B cell (primary cell): ENCODE measurements at regions of chr4 and their contacts with region 1.

Region 1: DNA sequence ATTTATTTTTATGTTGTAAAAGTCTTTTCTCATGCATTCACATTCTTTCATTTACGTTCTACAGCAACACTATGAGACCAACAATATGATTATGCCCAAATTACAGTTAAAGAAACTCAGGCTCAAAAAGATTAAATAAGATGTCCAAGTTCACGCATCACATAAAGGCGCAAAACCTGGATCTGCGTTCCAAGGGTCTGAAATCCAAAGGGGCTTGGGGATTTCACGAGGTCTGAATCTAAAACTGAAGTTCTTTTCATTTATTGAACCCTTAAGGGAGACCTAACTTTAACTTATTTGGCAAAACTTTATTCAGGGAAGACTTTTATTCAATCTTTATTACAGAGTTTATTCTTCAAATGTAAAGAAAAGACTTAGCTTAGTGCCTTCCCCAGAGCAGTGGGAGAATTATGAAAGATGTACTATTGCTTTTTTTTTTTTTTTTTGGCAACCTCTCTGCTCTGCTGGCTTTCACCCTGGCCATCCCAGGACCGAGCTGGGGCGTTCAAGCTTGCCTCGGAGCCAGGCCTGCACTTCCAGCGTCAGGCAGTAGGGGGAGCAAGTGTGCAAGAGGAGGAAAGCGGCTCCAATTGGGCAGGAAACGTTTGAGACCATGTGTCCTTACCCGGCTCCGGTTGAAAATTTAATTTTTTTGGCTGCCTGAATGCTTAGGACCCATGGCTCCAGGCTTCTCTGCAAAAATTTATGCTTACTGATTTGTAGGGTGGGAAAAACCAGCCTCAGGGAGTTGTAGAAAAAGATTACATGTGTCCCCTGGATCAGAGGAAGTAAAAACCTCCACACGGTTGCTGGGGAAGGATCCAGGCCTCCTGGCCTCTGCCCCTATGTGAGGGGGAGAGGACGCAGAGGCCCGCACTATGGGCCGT is 344.3 kb upstream of the KLF3 start:
- DNase-seq: peak; percentile 85
- ATAC-seq: peak; percentile 81
- H3K4me3 ChIP-seq: peak overlapping the region; percentile 43 to 74 (median 54)
- H3K4me3 Mint-ChIP-seq: peak overlapping the region; percentile 83
- H3K27ac ChIP-seq: peak overlapping the region; percentile 82 to 87
- H3K27ac Mint-ChIP-seq: peak overlapping the region; percentile 86
- H3K4me1 ChIP-seq: peaks cover 16 to 21% of the 10 kb centered on the region in 2 donors
- H3K4me1 Mint-ChIP-seq: peaks cover 29% of the 10 kb centered on the region
- H3K27me3 ChIP-seq: no peaks in the 10 kb centered on the region
- H3K27me3 Mint-ChIP-seq: no peaks in the 10 kb centered on the region
- CTCF ChIP-seq: peak; percentile 93

Region 2: GRCh38 chr4:37686373-37687193 is 633.1 kb before region 1 on chr4 and contains the start of gene RELL1:
- CTCF ChIA-PET with region 1: no interaction called
- POLR2A ChIA-PET with region 1: no interaction called
- intact Hi-C with region 1: loop called (anchors 10 kb)
- DNase-seq: peak; percentile 96
- ATAC-seq: peak; percentile 85
- H3K4me3 ChIP-seq: peak within 1 kb of the TSS; percentile 66 to 86 (median 81)
- H3K4me3 Mint-ChIP-seq: peak within 1 kb of the TSS; percentile 92
- H3K27ac ChIP-seq: peak within 1 kb of the TSS; percentile 45 to 70
- H3K27ac Mint-ChIP-seq: peak within 1 kb of the TSS; percentile 89
- H3K4me1 ChIP-seq: peaks cover 31% of the 10 kb centered on the region in 2 donors
- H3K4me1 Mint-ChIP-seq: peaks cover 31% of the 10 kb centered on the region
- H3K27me3 ChIP-seq: peaks cover 0 to 12% (median 4%) of the 10 kb centered on the region in 4 experiments
- H3K27me3 Mint-ChIP-seq: peaks cover 12% of the 10 kb centered on the region
- CTCF ChIP-seq: no peak
- total RNA-seq, gene RELL1: 2.7 and 3.2 TPM in 2 replicates

Region 3: DNA sequence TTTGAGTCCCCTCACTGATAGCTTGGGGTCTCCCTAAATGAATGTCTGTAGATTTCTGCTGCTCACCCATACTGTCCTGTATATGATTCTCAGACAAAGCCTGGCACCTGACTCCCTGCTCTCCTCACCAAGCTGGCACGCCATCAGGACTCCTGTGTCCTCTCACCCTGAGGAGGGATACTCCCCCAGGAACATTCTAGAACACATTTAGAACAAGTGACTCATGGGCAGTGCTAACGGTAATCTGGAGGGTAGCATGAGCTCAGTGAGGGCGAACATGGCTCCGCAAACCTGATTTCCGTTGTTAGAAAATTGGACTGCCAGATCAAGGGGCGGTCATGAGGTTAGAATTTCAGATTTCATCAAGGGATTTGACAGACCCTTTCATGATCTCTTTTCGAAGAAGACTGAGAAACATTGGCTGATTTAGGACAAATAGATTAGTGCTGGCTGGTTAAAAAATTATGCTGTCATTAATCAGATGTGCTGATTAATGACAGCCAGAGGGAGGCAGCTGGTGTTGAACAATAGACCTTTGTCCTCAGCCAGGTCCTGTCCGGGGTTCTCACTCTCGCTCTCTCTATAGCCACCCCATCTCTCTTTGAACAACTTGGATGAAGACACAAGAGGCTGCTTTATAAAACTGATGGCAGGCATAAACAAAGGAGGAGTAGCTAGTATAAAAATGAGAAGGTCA is 115.2 kb before region 1 on chr4:
- CTCF ChIA-PET with region 1: no interaction called
- POLR2A ChIA-PET with region 1: no interaction called
- intact Hi-C with region 1: no loop called
- DNase-seq: no peak
- ATAC-seq: no peak
- H3K4me3 ChIP-seq: no peak overlapping the region
- H3K4me3 Mint-ChIP-seq: no peak overlapping the region
- H3K27ac ChIP-seq: no peak overlapping the region
- H3K27ac Mint-ChIP-seq: no peak overlapping the region
- H3K4me1 ChIP-seq: no peaks in the 10 kb centered on the region
- H3K4me1 Mint-ChIP-seq: no peaks in the 10 kb centered on the region
- H3K27me3 ChIP-seq: no peaks in the 10 kb centered on the region
- H3K27me3 Mint-ChIP-seq: no peaks in the 10 kb centered on the region
- CTCF ChIP-seq: no peak

Region 4: GRCh38 chr4:38683276-38683675 is 363.6 kb after region 1 on chr4:
- CTCF ChIA-PET with region 1: interaction called, 109 read pairs
- POLR2A ChIA-PET with region 1: interaction called, 12 read pairs
- intact Hi-C with region 1: no loop called
- DNase-seq: no peak
- ATAC-seq: no peak
- H3K4me3 ChIP-seq: no peak overlapping the region
- H3K4me3 Mint-ChIP-seq: no peak overlapping the region
- H3K27ac ChIP-seq: no peak overlapping the region
- H3K27ac Mint-ChIP-seq: no peak overlapping the region
- H3K4me1 ChIP-seq: peaks cover 3 to 12% of the 10 kb centered on the region in 2 donors
- H3K4me1 Mint-ChIP-seq: peaks cover 30% of the 10 kb centered on the region
- H3K27me3 ChIP-seq: no peaks in the 10 kb centered on the region
- H3K27me3 Mint-ChIP-seq: no peaks in the 10 kb centered on the region
- CTCF ChIP-seq: no peak

Region 5: DNA sequence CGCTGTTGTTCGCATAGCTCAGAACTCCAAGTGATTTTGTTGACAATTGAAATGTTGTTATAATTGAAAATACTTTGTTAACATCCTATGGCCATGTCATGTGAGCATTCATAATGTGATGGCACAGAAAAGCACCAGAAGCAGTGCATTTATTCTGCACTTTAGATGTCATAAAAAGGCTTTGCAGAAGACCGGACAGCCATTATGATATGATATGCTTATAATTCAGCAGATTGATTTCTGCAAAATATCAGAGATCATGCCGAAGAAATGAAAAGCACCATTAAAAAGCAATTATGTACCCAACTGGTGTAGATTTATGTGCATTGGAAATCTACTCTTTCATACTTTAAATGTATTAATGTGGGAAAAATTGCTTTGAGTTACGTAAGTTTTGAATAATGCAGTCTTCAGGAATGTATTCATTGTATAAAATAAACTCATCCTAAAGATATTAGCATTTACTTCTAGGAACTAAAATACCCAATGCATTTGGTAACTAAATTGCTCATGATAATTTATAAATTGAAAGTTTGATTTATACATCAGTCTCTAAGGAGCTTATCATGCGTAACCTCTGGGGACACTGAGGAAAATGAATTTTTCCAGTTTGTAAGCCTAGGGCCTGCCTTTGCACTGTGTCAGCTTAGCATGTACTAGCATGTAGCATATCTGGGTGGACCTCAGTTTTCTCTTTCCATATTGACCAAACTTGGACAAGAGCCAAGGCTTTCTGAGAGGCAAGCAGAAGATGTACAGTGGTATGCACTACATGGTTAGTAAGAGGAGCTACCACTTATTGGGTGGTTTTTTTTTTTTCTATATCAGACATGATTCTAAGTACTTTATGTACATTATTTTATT is 419.5 kb after region 1 on chr4:
- CTCF ChIA-PET with region 1: no interaction called
- POLR2A ChIA-PET with region 1: interaction called, 11 read pairs
- intact Hi-C with region 1: no loop called
- DNase-seq: no peak
- ATAC-seq: no peak
- H3K4me3 ChIP-seq: no peak overlapping the region
- H3K4me3 Mint-ChIP-seq: no peak overlapping the region
- H3K27ac ChIP-seq: no peak overlapping the region
- H3K27ac Mint-ChIP-seq: no peak overlapping the region
- H3K4me1 ChIP-seq: peaks cover 10 to 13% of the 10 kb centered on the region in 2 donors
- H3K4me1 Mint-ChIP-seq: peaks cover 13% of the 10 kb centered on the region
- H3K27me3 ChIP-seq: no peaks in the 10 kb centered on the region
- H3K27me3 Mint-ChIP-seq: no peaks in the 10 kb centered on the region
- CTCF ChIP-seq: no peak

Region 6: DNA sequence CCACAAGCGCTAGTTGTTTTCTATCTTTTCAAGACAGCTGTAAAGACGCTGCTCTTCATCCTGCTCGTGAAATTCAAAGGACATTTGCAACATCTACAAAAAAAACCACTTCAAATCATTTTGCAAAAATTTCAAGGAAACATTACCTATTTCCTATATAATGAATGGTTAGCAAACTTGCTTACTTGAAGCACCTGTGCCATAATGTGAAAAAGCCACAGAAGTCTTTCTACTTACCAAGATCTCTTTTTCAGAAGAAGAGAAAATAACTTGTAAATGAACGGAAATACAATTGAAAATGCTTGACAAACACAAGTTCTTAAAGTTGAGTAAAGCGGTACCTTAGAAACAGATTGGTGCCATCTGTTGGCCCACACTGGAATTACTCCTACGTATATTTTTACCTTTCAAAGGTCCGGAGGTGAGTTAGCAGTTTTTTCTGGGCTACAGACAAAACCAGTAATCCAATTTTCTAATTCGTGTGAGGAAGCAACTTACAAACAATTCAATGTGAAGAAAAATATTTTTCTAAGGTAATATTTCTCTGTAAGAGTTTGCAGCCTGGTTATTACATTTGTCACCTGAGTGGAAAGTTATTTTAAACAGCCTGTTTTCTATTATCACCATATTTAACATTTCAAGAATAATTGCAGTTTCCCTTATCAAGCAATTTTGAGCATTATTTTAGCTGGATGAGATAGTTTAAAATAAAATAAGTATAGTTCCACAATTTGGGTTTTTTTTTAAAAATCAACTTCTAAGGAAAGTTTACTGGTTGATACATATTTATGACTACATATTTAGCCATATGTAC is 537.0 kb after region 1 on chr4 and contains the start of gene TLR6:
- CTCF ChIA-PET with region 1: no interaction called
- POLR2A ChIA-PET with region 1: no interaction called
- intact Hi-C with region 1: loop called (anchors 5 kb)
- DNase-seq: peak; percentile 87
- ATAC-seq: peak; percentile 56
- H3K4me3 ChIP-seq: peak within 1 kb of the TSS; percentile 51 to 78 (median 70)
- H3K4me3 Mint-ChIP-seq: peak within 1 kb of the TSS; percentile 93
- H3K27ac ChIP-seq: peak within 1 kb of the TSS; percentile 73 to 77
- H3K27ac Mint-ChIP-seq: peak within 1 kb of the TSS; percentile 94
- H3K4me1 ChIP-seq: peaks cover 39 to 43% of the 10 kb centered on the region in 2 donors
- H3K4me1 Mint-ChIP-seq: peaks cover 52% of the 10 kb centered on the region
- H3K27me3 ChIP-seq: no peaks in the 10 kb centered on the region
- H3K27me3 Mint-ChIP-seq: no peaks in the 10 kb centered on the region
- CTCF ChIP-seq: peak; percentile 87
- total RNA-seq, gene TLR6: 54.4 and 60.6 TPM in 2 replicates